Heart left ventricle (tissue), 16 donors: ENCODE measurements at regions of chr6 and their contacts with region 1.

Region 1: GRCh38 chr6:146532702-146533101 is 10.9 kb upstream of the RAB32 start:
- DNase-seq: no peak
- ATAC-seq: no peak
- H3K4me3 ChIP-seq: no peak overlapping the region
- H3K27ac ChIP-seq: no peak overlapping the region
- H3K4me1 ChIP-seq: no peaks in the 10 kb centered on the region
- H3K27me3 ChIP-seq: no peaks in the 10 kb centered on the region
- CTCF ChIP-seq: no peak
- POLR2A ChIP-seq: no peak

Region 2: DNA sequence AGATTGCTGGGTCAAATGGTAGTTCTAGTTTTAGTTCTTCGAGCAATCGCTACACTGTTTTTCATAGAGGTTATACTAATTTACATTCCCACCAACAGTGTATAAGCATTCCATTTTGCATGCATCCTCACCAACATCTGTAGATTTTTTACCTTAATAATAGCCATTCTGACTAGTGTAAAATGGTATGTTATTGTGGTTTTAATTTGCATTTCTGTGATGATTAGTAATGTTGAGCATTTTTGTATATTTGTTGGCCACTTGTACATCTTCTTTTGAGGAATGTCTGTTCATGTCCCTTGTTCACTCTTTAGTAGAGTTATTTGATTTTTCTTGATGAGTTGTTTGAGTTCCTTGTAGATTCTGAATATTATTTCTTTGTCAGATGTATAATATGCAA is 267.6 kb before region 1 on chr6:
- intact Hi-C with region 1: loop called in 1 of 10 experiments (anchors 10 kb)
- DNase-seq: no peak
- ATAC-seq: no peak
- H3K4me3 ChIP-seq: no peak overlapping the region
- H3K27ac ChIP-seq: no peak overlapping the region
- H3K4me1 ChIP-seq: no peaks in the 10 kb centered on the region
- H3K27me3 ChIP-seq: no peaks in the 10 kb centered on the region
- CTCF ChIP-seq: no peak
- POLR2A ChIP-seq: no peak

Region 3: GRCh38 chr6:146827216-146827928 is 294.7 kb after region 1 on chr6:
- intact Hi-C with region 1: no loop called
- DNase-seq: no peak
- ATAC-seq: no peak
- H3K4me3 ChIP-seq: no peak overlapping the region
- H3K27ac ChIP-seq: no peak overlapping the region
- H3K4me1 ChIP-seq: no peaks in the 10 kb centered on the region
- H3K27me3 ChIP-seq: no peaks in the 10 kb centered on the region
- CTCF ChIP-seq: no peak
- POLR2A ChIP-seq: no peak